ENCODE measurements at regions of chr13 and their contacts with region 1.

Region 1: GRCh38 chr13:36736119-36736726 is 62.4 kb downstream of the SERTM1 start:
- DNase-seq: peak; percentile 65
- H3K4me3 ChIP-seq: no peak overlapping the region
- H3K27ac ChIP-seq: no peak overlapping the region
- H3K4me1 ChIP-seq: no peaks in the 10 kb centered on the region
- H3K27me3 ChIP-seq: peaks cover 5 to 8% of the 10 kb centered on the region in 2 experiments
- CTCF ChIP-seq: peak; percentile 45 to 48
- POLR2A ChIP-seq: no peak

Region 2: GRCh38 chr13:36420437-36420891 is 315.8 kb before region 1 on chr13:
- CTCF ChIA-PET with region 1: interaction called, 120 read pairs
- POLR2A ChIA-PET with region 1: no interaction called
- dilution Hi-C with region 1: no loop called
- intact Hi-C with region 1: loop called (anchors 1 kb)
- DNase-seq: peak; percentile 84
- H3K4me3 ChIP-seq: no peak overlapping the region
- H3K27ac ChIP-seq: no peak overlapping the region
- H3K4me1 ChIP-seq: peaks cover 32% of the 10 kb centered on the region
- H3K27me3 ChIP-seq: no peaks in the 10 kb centered on the region
- CTCF ChIP-seq: peak; percentile 86 to 91
- POLR2A ChIP-seq: no peak

Region 3: DNA sequence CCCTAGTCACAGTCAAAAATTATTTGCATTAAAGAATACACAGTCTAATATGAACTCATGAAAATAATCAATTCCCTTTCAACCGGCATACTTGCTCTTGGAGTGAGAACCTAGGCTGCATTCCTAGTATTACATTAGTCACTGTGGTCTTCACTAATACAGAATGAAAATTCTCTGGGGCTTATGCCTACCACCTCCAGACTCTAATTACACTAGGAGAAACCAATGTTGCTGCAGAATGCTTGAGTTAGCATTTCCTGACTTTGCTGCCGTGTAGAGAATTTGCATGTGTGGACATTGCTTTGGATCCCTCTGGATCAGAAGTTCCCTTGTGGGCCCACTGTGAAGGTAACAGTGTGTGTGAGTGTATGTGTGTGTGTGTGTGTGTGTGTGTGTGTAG is 216.1 kb before region 1 on chr13:
- CTCF ChIA-PET with region 1: no interaction called
- POLR2A ChIA-PET with region 1: no interaction called
- dilution Hi-C with region 1: no loop called
- intact Hi-C with region 1: no loop called
- DNase-seq: no peak
- H3K4me3 ChIP-seq: no peak overlapping the region
- H3K27ac ChIP-seq: no peak overlapping the region
- H3K4me1 ChIP-seq: no peaks in the 10 kb centered on the region
- H3K27me3 ChIP-seq: peaks cover 0 to 3% of the 10 kb centered on the region in 2 experiments
- CTCF ChIP-seq: no peak
- POLR2A ChIP-seq: no peak

Region 4: GRCh38 chr13:36530050-36530789 is 206.0 kb before region 1 on chr13:
- CTCF ChIA-PET with region 1: interaction called, 13 read pairs
- POLR2A ChIA-PET with region 1: no interaction called
- dilution Hi-C with region 1: no loop called
- intact Hi-C with region 1: no loop called
- DNase-seq: peak; percentile 20
- H3K4me3 ChIP-seq: no peak overlapping the region
- H3K27ac ChIP-seq: no peak overlapping the region
- H3K4me1 ChIP-seq: peaks cover 47% of the 10 kb centered on the region
- H3K27me3 ChIP-seq: no peaks in the 10 kb centered on the region
- CTCF ChIP-seq: no peak
- POLR2A ChIP-seq: no peak

Region 5: GRCh38 chr13:36680913-36681312 is 55.3 kb before region 1 on chr13:
- CTCF ChIA-PET with region 1: interaction called, 12 read pairs
- POLR2A ChIA-PET with region 1: no interaction called
- dilution Hi-C with region 1: no loop called
- intact Hi-C with region 1: no loop called
- DNase-seq: no peak
- H3K4me3 ChIP-seq: no peak overlapping the region
- H3K27ac ChIP-seq: no peak overlapping the region
- H3K4me1 ChIP-seq: no peaks in the 10 kb centered on the region
- H3K27me3 ChIP-seq: peaks cover under 1 to 15% of the 10 kb centered on the region in 2 experiments
- CTCF ChIP-seq: no peak
- POLR2A ChIP-seq: no peak

Region 6: GRCh38 chr13:36981156-36981743 is 245.0 kb after region 1 on chr13:
- CTCF ChIA-PET with region 1: interaction called, 37 read pairs
- POLR2A ChIA-PET with region 1: no interaction called
- dilution Hi-C with region 1: no loop called
- intact Hi-C with region 1: loop called (anchors 5 kb)
- DNase-seq: peak; percentile 75
- H3K4me3 ChIP-seq: no peak overlapping the region
- H3K27ac ChIP-seq: no peak overlapping the region
- H3K4me1 ChIP-seq: no peaks in the 10 kb centered on the region
- H3K27me3 ChIP-seq: no peaks in the 10 kb centered on the region
- CTCF ChIP-seq: peak; percentile 33 to 37
- POLR2A ChIP-seq: no peak

Region 7: GRCh38 chr13:37225414-37226070 is 489.3 kb after region 1 on chr13:
- CTCF ChIA-PET with region 1: no interaction called
- POLR2A ChIA-PET with region 1: no interaction called
- dilution Hi-C with region 1: no loop called
- intact Hi-C with region 1: no loop called
- DNase-seq: no peak
- H3K4me3 ChIP-seq: no peak overlapping the region
- H3K27ac ChIP-seq: no peak overlapping the region
- H3K4me1 ChIP-seq: no peaks in the 10 kb centered on the region
- H3K27me3 ChIP-seq: peaks cover 0 to 1% of the 10 kb centered on the region in 2 experiments
- CTCF ChIP-seq: no peak
- POLR2A ChIP-seq: no peak